ENCODE measurements at regions of chr2 and their contacts with region 1.

Region 1: GRCh38 chr2:127479219-127479825 is 47.0 kb downstream of the IWS1 start:
- DNase-seq: peak in 6 of 9 donors; percentile 15 to 53 (median 32)
- ATAC-seq: peak; percentile 54
- H3K4me3 ChIP-seq: no peak overlapping the region
- H3K4me3 Mint-ChIP-seq: no peak overlapping the region
- H3K27ac ChIP-seq: no peak overlapping the region
- H3K27ac Mint-ChIP-seq: no peak overlapping the region
- H3K4me1 ChIP-seq: no peaks in the 10 kb centered on the region
- H3K4me1 Mint-ChIP-seq: peaks cover 0 to 4% (median 0%) of the 10 kb centered on the region in 7 donors
- H3K27me3 ChIP-seq: no peaks in the 10 kb centered on the region
- H3K27me3 Mint-ChIP-seq: no peaks in the 10 kb centered on the region

Region 2: GRCh38 chr2:127064642-127065250 is 414.6 kb before region 1 on chr2:
- CTCF ChIA-PET with region 1: interaction called, 5 read pairs
- POLR2A ChIA-PET with region 1: no interaction called
- intact Hi-C with region 1: loop called (anchors 1 kb)
- DNase-seq: peak in 2 of 9 donors; percentile 33 to 82
- ATAC-seq: peak; percentile 83
- H3K4me3 ChIP-seq: no peak overlapping the region
- H3K4me3 Mint-ChIP-seq: no peak overlapping the region
- H3K27ac ChIP-seq: no peak overlapping the region
- H3K27ac Mint-ChIP-seq: peak overlapping the region in 1 of 9 donors; percentile 18
- H3K4me1 ChIP-seq: peaks cover 5 to 9% of the 10 kb centered on the region in 2 donors
- H3K4me1 Mint-ChIP-seq: peaks cover 6 to 23% (median 12%) of the 10 kb centered on the region in 7 donors
- H3K27me3 ChIP-seq: no peaks in the 10 kb centered on the region
- H3K27me3 Mint-ChIP-seq: no peaks in the 10 kb centered on the region

Region 3: GRCh38 chr2:127197475-127198385 is 281.6 kb before region 1 on chr2:
- CTCF ChIA-PET with region 1: interaction called, 13 read pairs
- POLR2A ChIA-PET with region 1: no interaction called
- intact Hi-C with region 1: loop called (anchors 1 kb)
- DNase-seq: peak; percentile 15 to 46 (median 32)
- ATAC-seq: peak; percentile 89
- H3K4me3 ChIP-seq: no peak overlapping the region
- H3K4me3 Mint-ChIP-seq: peak overlapping the region; percentile 66 to 85 (median 77)
- H3K27ac ChIP-seq: no peak overlapping the region
- H3K27ac Mint-ChIP-seq: peak overlapping the region in 2 of 9 donors; percentile 10 to 39
- H3K4me1 ChIP-seq: no peaks in the 10 kb centered on the region
- H3K4me1 Mint-ChIP-seq: peaks cover 0 to 5% (median 0%) of the 10 kb centered on the region in 7 donors
- H3K27me3 ChIP-seq: no peaks in the 10 kb centered on the region
- H3K27me3 Mint-ChIP-seq: peaks cover 0 to 4% (median 0%) of the 10 kb centered on the region in 5 donors

Region 4: GRCh38 chr2:127305990-127306585 is 173.2 kb before region 1 on chr2:
- CTCF ChIA-PET with region 1: no interaction called
- POLR2A ChIA-PET with region 1: no interaction called
- intact Hi-C with region 1: no loop called
- DNase-seq: no peak
- ATAC-seq: no peak
- H3K4me3 ChIP-seq: no peak overlapping the region
- H3K4me3 Mint-ChIP-seq: no peak overlapping the region
- H3K27ac ChIP-seq: no peak overlapping the region
- H3K27ac Mint-ChIP-seq: peak overlapping the region in 1 of 9 donors; percentile 56
- H3K4me1 ChIP-seq: no peaks in the 10 kb centered on the region
- H3K4me1 Mint-ChIP-seq: peaks cover 0 to 1% (median 0%) of the 10 kb centered on the region in 7 donors
- H3K27me3 ChIP-seq: no peaks in the 10 kb centered on the region
- H3K27me3 Mint-ChIP-seq: no peaks in the 10 kb centered on the region

Region 5: DNA sequence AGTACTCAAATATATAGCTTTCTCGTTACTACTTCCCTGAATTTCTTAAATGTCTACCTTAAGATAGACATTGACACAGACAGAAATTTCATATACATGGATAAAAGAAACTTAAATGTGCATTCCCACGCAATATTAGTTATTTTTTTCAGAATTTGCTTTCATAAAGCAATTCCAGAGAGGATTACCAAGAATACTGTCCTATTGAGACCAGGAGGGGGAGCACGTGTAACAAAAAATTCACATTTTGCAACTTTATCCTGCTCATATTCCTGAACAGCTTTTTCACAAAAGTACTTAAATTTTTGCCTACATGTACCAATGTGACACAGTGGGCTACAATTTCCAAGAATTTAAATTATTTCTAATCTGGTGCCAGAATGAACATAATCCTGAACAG is 154.7 kb before region 1 on chr2:
- CTCF ChIA-PET with region 1: interaction called, 13 read pairs
- POLR2A ChIA-PET with region 1: no interaction called
- intact Hi-C with region 1: loop called (anchors 1 kb)
- DNase-seq: peak in 3 of 9 donors; percentile 3 to 8 (median 7)
- ATAC-seq: no peak
- H3K4me3 ChIP-seq: no peak overlapping the region
- H3K4me3 Mint-ChIP-seq: no peak overlapping the region
- H3K27ac ChIP-seq: no peak overlapping the region
- H3K27ac Mint-ChIP-seq: no peak overlapping the region
- H3K4me1 ChIP-seq: no peaks in the 10 kb centered on the region
- H3K4me1 Mint-ChIP-seq: peaks cover 0 to 6% (median 0%) of the 10 kb centered on the region in 7 donors
- H3K27me3 ChIP-seq: no peaks in the 10 kb centered on the region
- H3K27me3 Mint-ChIP-seq: no peaks in the 10 kb centered on the region

Region 6: DNA sequence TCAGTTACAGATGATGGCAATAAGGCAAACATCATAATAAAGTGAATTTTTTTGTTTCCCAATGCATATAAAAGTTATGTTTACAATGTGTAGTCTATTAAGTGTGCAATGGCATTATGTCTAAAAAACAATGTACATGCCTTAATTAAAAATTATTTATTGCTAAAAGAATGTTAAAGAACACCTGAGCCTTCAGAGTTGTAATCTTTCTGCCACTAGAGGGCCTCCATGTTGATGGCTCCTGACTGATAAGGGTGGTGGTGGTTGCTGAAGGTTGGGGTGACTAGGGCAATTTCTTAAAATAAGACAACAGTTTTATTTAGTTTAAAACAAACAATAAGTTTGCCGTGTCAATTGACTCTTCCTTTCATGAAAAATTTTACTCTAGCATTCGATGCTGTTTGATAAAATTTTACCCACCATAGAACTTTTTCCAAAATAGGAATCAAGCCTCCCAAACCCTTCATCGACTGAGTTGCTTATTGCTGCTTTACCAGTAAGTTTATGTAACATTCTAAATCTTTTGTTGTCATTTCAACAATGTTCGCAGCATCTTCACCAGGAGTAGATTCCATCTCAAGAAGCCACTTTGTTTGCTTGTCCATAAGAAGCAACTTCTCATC is 123.8 kb before region 1 on chr2:
- CTCF ChIA-PET with region 1: interaction called, 5 read pairs
- POLR2A ChIA-PET with region 1: no interaction called
- intact Hi-C with region 1: loop called (anchors 1 to 2 kb)
- DNase-seq: peak in 7 of 9 donors; percentile 15 to 60 (median 41)
- ATAC-seq: peak; percentile 82
- H3K4me3 ChIP-seq: no peak overlapping the region
- H3K4me3 Mint-ChIP-seq: no peak overlapping the region
- H3K27ac ChIP-seq: no peak overlapping the region
- H3K27ac Mint-ChIP-seq: peak overlapping the region in 4 of 9 donors; percentile 17 to 83 (median 27)
- H3K4me1 ChIP-seq: peaks cover 0 to 11% of the 10 kb centered on the region in 2 donors
- H3K4me1 Mint-ChIP-seq: peaks cover 25 to 82% (median 70%) of the 10 kb centered on the region in 7 donors
- H3K27me3 ChIP-seq: no peaks in the 10 kb centered on the region
- H3K27me3 Mint-ChIP-seq: no peaks in the 10 kb centered on the region